ENCODE measurements at regions of chr1 and their contacts with region 1.

Region 1: GRCh38 chr1:93345633-93346420 is at the start of gene DR1:
- DNase-seq: peak; percentile 90
- H3K4me3 Mint-ChIP-seq: peak within 1 kb of the TSS; percentile 100
- H3K27ac Mint-ChIP-seq: peak within 1 kb of the TSS; percentile 99
- H3K4me1 Mint-ChIP-seq: peaks cover 36% of the 10 kb centered on the region
- H3K27me3 Mint-ChIP-seq: no peaks in the 10 kb centered on the region
- total RNA-seq, gene DR1: 101 and 106 TPM in 2 replicates

Region 2: DNA sequence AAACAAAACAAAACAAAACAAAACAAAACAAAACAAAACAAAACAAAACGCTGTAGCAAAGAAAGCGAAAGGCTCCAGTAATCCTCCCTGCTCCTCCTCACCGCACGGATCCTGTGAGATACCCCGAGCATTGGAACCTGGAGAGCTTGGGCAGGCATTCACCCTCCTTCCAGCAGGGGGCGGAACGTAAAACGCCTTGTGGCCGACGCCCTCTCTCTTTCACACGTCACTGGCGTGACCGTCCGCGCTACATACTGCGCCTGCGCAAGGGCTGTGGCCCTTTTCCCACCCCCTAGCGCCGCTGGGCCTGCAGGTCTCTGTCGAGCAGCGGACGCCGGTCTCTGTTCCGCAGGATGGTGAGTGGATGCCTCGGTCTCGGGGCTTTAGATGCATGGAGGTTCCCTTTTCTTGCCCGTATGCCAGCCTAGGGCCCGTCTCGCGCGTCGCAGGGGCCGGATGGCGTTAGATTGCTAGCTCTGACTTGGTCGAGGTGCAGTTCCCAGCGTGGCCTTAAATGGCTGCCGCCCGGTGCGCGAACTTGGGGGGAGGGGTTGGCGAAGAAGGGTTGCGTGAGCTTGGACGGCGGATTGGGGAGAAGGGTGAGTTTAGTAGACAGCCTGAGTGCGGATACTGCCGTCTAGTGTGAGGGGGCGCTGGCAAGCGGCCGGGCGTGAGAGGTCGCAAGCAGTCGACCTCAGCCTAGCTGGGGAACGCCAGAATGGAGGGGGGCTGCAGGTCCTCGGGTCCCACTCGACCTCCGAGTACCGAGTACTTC is 513.9 kb before region 1 on chr1 and contains the start of gene RPL5:
- intact Hi-C with region 1: loop called (anchors 1 kb)
- DNase-seq: peak; percentile 96
- H3K4me3 Mint-ChIP-seq: peak within 1 kb of the TSS; percentile 96
- H3K27ac Mint-ChIP-seq: peak within 1 kb of the TSS; percentile 97
- H3K4me1 Mint-ChIP-seq: peaks cover 35% of the 10 kb centered on the region
- H3K27me3 Mint-ChIP-seq: peaks cover 2% of the 10 kb centered on the region
- total RNA-seq, gene RPL5: 1,115 and 1,120 TPM in 2 replicates

Region 3: GRCh38 chr1:93042187-93043056 is 303.4 kb before region 1 on chr1:
- intact Hi-C with region 1: loop called (anchors 1 kb)
- DNase-seq: peak; percentile 53
- H3K4me3 Mint-ChIP-seq: peak overlapping the region; percentile 74
- H3K27ac Mint-ChIP-seq: peak overlapping the region; percentile 84
- H3K4me1 Mint-ChIP-seq: peaks cover 37% of the 10 kb centered on the region
- H3K27me3 Mint-ChIP-seq: no peaks in the 10 kb centered on the region

Region 4: DNA sequence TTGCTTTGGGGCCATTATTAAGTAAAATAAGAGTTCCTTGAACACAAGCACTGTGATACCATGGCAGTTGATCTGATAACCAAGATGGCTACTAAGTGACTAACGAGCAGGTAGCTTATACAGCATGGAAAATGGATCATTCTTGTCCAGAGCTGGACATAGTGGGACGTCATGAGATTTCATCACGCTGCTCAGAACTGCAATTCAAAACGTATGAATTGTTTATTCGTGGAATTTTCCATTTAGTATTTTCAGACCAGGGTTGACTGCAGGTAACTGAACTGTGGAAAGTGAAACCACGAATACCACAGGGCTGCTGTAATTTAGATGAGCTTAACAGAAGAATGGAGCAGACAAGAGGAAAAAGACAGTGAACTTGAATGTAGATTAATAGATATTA is 126.4 kb before region 1 on chr1:
- intact Hi-C with region 1: loop called (anchors 1 kb)
- DNase-seq: peak; percentile 11
- H3K4me3 Mint-ChIP-seq: peak overlapping the region; percentile 72
- H3K27ac Mint-ChIP-seq: peak overlapping the region; percentile 87
- H3K4me1 Mint-ChIP-seq: peaks cover 22% of the 10 kb centered on the region
- H3K27me3 Mint-ChIP-seq: no peaks in the 10 kb centered on the region

Region 5: DNA sequence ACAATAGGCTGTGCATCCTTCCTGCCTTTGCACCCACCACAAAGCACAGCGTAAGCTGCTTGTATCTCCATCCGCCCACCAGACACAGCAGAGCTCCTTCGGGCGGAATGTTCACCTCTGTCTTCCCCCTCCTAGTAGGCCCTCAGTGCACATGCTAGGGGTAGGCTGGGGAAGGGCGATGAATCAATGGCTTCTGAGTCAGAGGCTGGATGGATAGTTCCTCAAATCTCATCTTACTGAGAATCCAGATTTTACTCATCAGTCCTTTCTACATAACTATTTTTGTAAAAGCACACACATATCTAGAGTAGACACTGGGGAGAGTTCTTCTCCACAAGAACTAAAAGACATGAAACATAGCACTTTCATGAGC is 262.0 kb after region 1 on chr1:
- intact Hi-C with region 1: loop called (anchors 5 kb)
- DNase-seq: no peak
- H3K4me3 Mint-ChIP-seq: peak overlapping the region; percentile 32
- H3K27ac Mint-ChIP-seq: no peak overlapping the region
- H3K4me1 Mint-ChIP-seq: peaks cover 25% of the 10 kb centered on the region
- H3K27me3 Mint-ChIP-seq: peaks cover 37% of the 10 kb centered on the region

Region 6: GRCh38 chr1:94228640-94229375 is 883.0 kb after region 1 on chr1:
- intact Hi-C with region 1: no loop called
- DNase-seq: no peak
- H3K4me3 Mint-ChIP-seq: no peak overlapping the region
- H3K27ac Mint-ChIP-seq: no peak overlapping the region
- H3K4me1 Mint-ChIP-seq: no peaks in the 10 kb centered on the region
- H3K27me3 Mint-ChIP-seq: peaks cover 38% of the 10 kb centered on the region

Region 7: GRCh38 chr1:95072532-95073419 is 1726.9 kb after region 1 on chr1 and contains the start of gene ALG14:
- intact Hi-C with region 1: loop called (anchors 2 kb)
- DNase-seq: peak; percentile 85
- H3K4me3 Mint-ChIP-seq: peak within 1 kb of the TSS; percentile 94
- H3K27ac Mint-ChIP-seq: peak within 1 kb of the TSS; percentile 93
- H3K4me1 Mint-ChIP-seq: peaks cover 18% of the 10 kb centered on the region
- H3K27me3 Mint-ChIP-seq: no peaks in the 10 kb centered on the region
- total RNA-seq, gene ALG14: 1.9 and 2.4 TPM in 2 replicates